Right lobe of liver (tissue), 6 donors: ENCODE measurements at regions of chr9 and their contacts with region 1.

Region 1: DNA sequence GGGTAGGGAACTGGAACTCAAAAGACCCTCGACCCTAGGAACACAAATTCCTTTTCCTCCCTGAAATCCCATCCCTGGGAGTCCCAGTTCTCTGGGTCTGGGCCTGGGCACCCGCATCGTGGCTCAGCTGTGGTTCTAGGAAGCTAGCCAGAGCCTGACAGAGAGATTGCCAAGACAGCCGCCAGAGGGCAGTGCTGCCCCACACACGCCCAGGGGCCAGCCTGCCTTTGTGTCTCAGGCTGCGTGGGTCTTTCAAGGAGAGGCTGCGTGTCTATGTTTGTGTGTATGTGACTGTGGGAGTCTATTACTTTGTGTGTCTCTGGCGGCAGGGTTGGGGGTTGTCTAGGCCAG is 32.0 kb upstream of the TTLL11 start:
- DNase-seq: peak; percentile 77 to 80 (median 79)
- ATAC-seq: peak; percentile 88 to 92 (median 90)
- H3K4me3 ChIP-seq: no peak overlapping the region
- H3K27ac ChIP-seq: no peak overlapping the region
- H3K4me1 ChIP-seq: peaks cover 0 to 4% (median 0%) of the 10 kb centered on the region in 4 donors
- H3K27me3 ChIP-seq: no peaks in the 10 kb centered on the region
- CTCF ChIP-seq: peak; percentile 94 to 97 (median 96)
- POLR2A ChIP-seq: no peak

Region 2: DNA sequence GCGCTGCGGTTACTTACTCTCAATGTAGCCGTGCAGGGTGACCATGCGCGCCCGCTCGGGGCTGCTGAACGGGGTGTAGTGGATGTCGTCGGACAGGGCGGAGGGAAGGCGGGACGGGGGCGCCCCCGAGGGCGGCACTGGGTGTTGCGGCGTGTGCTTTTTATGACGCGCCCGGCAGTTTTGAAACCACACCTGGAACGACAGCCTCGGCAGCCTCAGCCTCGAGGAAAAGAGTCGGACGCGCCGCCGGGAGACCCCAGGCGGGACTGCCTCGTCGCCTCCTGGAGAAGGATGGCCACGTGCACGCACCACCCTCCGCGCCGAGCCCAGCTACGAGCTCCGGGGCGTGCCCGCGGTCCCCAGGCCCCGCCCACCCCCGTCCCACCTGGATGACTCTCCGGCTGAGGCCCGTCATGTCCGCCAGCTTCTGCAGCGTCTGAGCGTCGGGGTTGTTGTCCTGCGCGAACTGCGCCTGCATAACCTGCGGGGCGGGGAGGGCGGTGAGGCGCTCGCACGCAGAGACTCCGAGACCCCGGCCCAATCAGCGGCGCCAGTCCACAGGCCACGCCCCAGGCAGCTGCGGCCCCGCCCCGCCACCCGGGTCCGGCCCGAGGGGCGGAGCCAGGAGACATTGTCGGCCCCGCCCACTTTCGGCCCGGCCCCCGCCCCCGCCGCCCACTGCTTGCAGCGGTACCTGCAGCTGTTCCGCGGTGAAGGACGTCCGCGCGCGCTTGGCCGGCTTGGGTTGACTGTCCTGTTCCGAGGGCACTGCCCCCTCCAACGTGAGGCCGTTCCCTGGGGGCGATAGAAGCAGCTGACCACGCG is 88.7 kb after region 1 on chr9:
- intact Hi-C with region 1: no loop called
- DNase-seq: no peak
- ATAC-seq: peak; percentile 51 to 68 (median 64)
- H3K4me3 ChIP-seq: peak overlapping the region in 2 of 3 donors; percentile 16 to 39
- H3K27ac ChIP-seq: no peak overlapping the region
- H3K4me1 ChIP-seq: no peaks in the 10 kb centered on the region
- H3K27me3 ChIP-seq: peaks cover 0 to 18% of the 10 kb centered on the region in 2 donors
- CTCF ChIP-seq: no peak
- POLR2A ChIP-seq: no peak

Region 3: DNA sequence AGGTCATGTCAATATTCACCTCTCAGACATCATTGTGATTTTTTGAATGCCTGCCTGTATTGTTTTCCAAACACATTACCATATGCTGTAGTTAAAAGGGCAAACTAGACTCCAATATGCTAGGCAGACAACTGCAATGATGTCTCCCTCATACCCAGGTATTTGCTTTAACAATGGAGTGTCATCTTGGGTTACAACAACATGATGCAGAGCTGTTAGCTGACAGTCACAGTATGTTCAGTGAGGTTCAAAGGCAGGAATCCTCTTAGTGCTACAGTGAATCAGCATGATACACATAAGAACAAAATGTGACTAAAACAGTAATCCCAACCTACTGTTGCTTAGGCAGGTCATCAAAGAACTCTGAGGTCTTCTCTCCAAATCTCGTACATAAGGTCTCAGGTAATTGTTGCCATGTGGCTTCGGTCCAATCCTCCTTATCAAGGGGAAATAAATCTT is 328.6 kb after region 1 on chr9:
- intact Hi-C with region 1: loop called in 1 of 2 experiments (anchors 10 kb)
- DNase-seq: no peak
- ATAC-seq: no peak
- H3K4me3 ChIP-seq: no peak overlapping the region
- H3K27ac ChIP-seq: no peak overlapping the region
- H3K4me1 ChIP-seq: no peaks in the 10 kb centered on the region
- H3K27me3 ChIP-seq: no peaks in the 10 kb centered on the region
- CTCF ChIP-seq: no peak
- POLR2A ChIP-seq: no peak